ENCODE measurements at regions of chr22 and their contacts with region 1.

Region 1: GRCh38 chr22:37566903-37567820 is 6.9 kb downstream of the CDC42EP1 start:
- H3K4me3 ChIP-seq: no peak overlapping the region
- H3K27ac ChIP-seq: no peak overlapping the region
- H3K4me1 ChIP-seq: peaks cover 17% of the 10 kb centered on the region
- CTCF ChIP-seq: peak; percentile 87

Region 2: GRCh38 chr22:37316875-37317371 is 250.2 kb before region 1 on chr22:
- CTCF ChIA-PET with region 1: interaction called, 10 read pairs
- POLR2A ChIA-PET with region 1: no interaction called
- H3K4me3 ChIP-seq: no peak overlapping the region
- H3K27ac ChIP-seq: no peak overlapping the region
- H3K4me1 ChIP-seq: no peaks in the 10 kb centered on the region
- CTCF ChIP-seq: peak; percentile 95

Region 3: DNA sequence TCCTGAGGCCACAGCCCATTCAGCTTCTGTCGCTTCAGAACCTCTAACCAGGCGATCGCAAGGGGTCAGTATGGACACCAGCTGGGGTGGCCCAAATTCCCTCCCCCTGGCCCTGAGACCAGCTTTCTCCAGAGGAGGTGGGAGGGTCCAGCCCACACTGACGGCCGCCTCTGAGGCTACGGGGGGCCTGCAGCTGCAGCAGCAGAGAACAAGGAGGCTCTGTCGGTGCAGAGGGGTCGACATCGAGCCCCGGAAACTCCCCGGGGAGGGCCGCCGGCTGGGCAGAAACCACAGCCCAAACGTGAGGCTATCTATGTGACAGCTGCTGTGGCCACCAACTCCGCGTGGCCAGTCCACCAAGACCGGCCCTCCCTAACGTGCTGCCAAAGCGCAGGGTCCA is 180.7 kb before region 1 on chr22:
- CTCF ChIA-PET with region 1: no interaction called
- POLR2A ChIA-PET with region 1: no interaction called
- H3K4me3 ChIP-seq: no peak overlapping the region
- H3K27ac ChIP-seq: no peak overlapping the region
- H3K4me1 ChIP-seq: no peaks in the 10 kb centered on the region
- CTCF ChIP-seq: no peak

Region 4: DNA sequence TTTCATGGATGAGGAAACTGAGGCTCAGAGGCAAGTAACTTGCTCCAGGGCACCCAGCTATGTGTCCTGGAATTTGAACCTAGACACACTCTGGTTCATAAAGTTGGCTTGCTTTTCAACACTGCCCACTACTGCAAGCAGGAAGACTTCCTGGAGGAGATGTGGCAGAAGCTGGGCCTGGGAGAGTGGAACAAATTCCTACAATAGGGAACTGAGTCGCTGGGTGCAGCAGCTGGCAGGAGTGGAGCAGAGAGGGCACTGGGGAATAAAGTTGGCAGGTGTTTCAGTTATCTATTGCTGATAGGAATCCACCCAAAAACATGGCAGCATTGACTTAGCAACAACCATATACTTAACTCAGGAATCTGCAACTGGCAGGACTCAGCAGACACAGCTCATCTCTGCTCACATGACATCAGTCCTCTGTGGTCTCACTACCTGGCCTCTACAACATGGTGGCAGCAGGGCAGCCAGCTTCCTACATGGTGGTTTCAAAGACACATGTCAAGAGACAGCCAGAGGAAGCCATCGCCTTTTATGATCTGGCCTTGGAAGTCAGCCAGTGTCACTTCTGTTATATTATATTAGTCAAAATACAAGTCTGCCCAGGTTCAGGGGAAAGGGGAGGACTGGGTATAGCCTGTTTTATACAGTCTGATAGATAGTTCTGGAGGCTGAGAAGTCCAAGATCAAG is 37.4 kb before region 1 on chr22:
- CTCF ChIA-PET with region 1: interaction called, 13 read pairs
- POLR2A ChIA-PET with region 1: interaction called, 4 read pairs
- H3K4me3 ChIP-seq: no peak overlapping the region
- H3K27ac ChIP-seq: no peak overlapping the region
- H3K4me1 ChIP-seq: peaks cover 5% of the 10 kb centered on the region
- CTCF ChIP-seq: no peak

Region 5: DNA sequence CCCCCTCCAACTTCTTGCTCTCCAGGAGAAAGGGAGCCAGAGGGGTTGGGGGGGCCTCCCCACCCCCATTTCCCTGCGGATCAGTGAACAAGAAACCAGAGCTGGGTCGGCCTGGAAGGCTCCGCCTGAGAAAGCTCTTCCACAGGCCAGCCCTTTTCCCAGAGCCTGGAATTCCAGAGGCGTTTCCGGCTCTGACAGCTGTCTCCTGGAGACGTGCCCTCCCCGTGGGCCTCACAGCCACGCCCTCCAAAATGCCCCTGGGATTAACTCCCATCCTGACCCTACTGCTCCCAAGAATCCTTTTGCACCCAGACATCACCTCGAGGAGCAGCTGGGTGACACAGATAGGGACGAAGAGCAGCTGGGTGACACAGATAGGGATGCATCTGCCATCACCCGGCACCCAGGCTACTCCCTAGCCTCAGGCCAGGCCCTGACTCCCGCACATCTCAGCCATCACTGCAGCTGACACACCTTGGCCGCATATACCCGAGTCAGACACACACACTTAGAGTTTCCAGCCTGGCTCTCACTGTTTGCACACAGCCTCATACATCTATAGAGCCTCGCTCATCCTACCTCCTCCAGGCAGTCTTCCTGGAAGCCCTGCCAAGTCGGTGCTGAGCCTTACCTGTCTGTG is 14.5 kb before region 1 on chr22:
- CTCF ChIA-PET with region 1: interaction called, 608 read pairs
- POLR2A ChIA-PET with region 1: interaction called, 12 read pairs
- H3K4me3 ChIP-seq: no peak overlapping the region
- H3K27ac ChIP-seq: no peak overlapping the region
- H3K4me1 ChIP-seq: no peaks in the 10 kb centered on the region
- CTCF ChIP-seq: no peak

Region 6: DNA sequence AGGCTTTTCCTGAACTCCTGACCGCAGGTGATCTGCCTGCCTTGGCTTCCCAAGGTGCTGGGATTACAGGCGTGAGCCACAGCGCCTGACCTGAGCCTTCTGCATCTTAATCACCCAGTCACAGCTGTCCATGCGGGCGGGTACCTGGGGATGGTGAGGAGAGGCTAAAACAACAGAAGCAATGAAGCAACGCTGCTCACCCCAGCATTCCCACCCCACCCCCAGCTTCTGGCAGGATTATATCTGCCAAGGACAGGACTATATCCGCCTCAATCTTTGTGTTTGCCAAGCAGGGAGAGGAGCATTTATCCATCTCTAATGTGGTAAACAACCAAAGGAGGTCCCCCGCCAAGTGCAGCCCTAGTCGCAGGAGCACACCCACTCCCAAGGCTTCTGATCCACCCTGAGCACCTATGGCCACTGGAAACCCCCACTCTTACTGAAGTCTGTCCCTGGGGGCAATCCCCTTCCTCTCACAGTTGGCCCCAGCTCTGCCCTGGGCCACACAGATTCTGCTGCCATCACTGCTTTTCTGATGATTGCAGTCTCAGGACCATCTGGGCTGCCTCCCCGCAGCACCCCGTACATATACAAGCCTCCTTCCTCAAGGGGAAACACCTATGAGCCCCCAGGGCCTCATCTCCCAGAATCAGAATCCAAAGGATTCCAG is 21.5 kb after region 1 on chr22:
- CTCF ChIA-PET with region 1: interaction called, 145 read pairs
- POLR2A ChIA-PET with region 1: interaction called, 22 read pairs
- H3K4me3 ChIP-seq: no peak overlapping the region
- H3K27ac ChIP-seq: no peak overlapping the region
- H3K4me1 ChIP-seq: no peaks in the 10 kb centered on the region; the same call in 1 of the 2 replicates
- CTCF ChIP-seq: no peak

Region 7: GRCh38 chr22:37601540-37602442 is 34.6 kb after region 1 on chr22:
- CTCF ChIA-PET with region 1: interaction called, 33 read pairs
- POLR2A ChIA-PET with region 1: interaction called, 8 read pairs
- H3K4me3 ChIP-seq: no peak overlapping the region
- H3K27ac ChIP-seq: no peak overlapping the region
- H3K4me1 ChIP-seq: peaks cover 4% of the 10 kb centered on the region; the same call in 1 of the 2 replicates
- CTCF ChIP-seq: no peak

Region 8: GRCh38 chr22:38143036-38143697 is 576.0 kb after region 1 on chr22:
- CTCF ChIA-PET with region 1: no interaction called
- POLR2A ChIA-PET with region 1: no interaction called
- H3K4me3 ChIP-seq: no peak overlapping the region
- H3K27ac ChIP-seq: no peak overlapping the region
- H3K4me1 ChIP-seq: 0 out of 2 replicates have a peak, but pooled peaks cover 3% of the 10 kb centered on the region
- CTCF ChIP-seq: no peak

Measured in HEK293 (cell line).